ENCODE measurements at regions of chr6 and their contacts with region 1.

Region 1: GRCh38 chr6:17987576-17988421 is at the start of gene KIF13A:
- DNase-seq: peak; percentile 78 to 92 (median 86)
- H3K4me3 ChIP-seq: peak within 1 kb of the TSS; percentile 70 to 96 (median 86)
- H3K27ac ChIP-seq: peak within 1 kb of the TSS; percentile 40 to 73
- H3K4me1 ChIP-seq: peaks cover 15 to 46% (median 35%) of the 10 kb centered on the region in 4 experiments
- H3K27me3 ChIP-seq: no peaks in the 10 kb centered on the region

Region 2: DNA sequence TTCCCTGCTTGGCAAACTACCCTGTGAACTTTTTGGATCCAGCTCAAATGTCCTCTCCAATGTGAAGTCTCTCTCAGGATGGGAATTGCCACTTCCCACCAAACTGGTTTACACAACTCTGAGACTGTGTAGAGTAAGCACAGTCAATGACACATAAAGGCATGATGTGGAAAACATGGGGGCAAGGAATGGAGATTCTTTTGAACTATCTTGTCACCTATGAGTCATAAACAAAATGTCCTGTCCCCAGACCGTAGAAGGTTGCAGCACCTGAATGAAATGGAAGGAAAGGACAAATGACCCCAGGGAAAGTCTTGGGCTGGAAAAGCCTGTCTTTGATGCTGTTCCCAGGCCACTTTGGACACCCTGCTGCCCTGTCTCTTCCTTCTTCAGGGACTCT is 10.7 kb after region 1 on chr6:
- CTCF ChIA-PET with region 1: no interaction called
- POLR2A ChIA-PET with region 1: no interaction called
- DNase-seq: no peak
- H3K4me3 ChIP-seq: no peak overlapping the region
- H3K27ac ChIP-seq: no peak overlapping the region
- H3K4me1 ChIP-seq: peaks cover 0 to 13% (median 4%) of the 10 kb centered on the region in 4 experiments
- H3K27me3 ChIP-seq: no peaks in the 10 kb centered on the region

Region 3: DNA sequence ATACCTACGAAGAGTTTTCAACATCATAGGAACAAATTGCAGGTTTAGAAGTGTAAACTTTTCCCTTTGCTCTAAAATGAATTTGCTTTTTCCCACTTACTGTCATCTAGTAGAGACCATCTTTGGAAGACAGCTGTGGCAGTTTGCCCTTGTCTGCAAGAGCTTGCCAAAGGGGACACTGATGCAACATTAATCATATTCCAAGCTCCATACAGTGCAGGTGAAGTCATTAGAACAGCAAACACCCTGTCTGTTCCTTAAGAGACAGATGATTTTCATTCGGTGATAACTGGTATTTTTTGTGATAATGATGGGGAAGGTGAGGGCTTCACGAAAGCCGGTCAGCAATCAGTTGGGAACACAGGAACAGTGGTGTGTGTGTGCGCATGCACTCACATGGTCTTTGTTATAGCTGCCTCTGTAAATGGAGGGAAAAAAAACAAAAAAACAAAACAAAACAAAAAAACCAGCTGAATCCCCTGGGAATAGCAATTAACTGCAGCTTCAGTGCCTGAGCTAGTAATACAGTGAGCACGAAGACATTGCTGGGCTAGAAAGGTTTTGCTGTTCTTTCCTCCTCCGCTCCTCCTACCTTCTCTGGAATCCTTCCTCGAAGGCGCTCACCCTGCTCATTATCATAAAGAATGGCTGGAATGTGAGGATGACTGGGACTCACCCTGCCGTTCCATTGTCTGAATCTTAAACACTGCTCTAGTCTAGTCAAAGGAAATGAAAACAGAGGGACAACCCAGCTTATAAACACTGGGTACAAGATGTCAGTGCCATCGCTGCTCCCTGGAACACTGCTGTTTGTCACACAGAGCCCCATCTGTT is 34.8 kb after region 1 on chr6:
- CTCF ChIA-PET with region 1: no interaction called
- POLR2A ChIA-PET with region 1: no interaction called
- DNase-seq: no peak
- H3K4me3 ChIP-seq: no peak overlapping the region
- H3K27ac ChIP-seq: no peak overlapping the region
- H3K4me1 ChIP-seq: no peaks in the 10 kb centered on the region
- H3K27me3 ChIP-seq: peaks cover 0 to 3% (median 0%) of the 10 kb centered on the region in 5 experiments

Region 4: DNA sequence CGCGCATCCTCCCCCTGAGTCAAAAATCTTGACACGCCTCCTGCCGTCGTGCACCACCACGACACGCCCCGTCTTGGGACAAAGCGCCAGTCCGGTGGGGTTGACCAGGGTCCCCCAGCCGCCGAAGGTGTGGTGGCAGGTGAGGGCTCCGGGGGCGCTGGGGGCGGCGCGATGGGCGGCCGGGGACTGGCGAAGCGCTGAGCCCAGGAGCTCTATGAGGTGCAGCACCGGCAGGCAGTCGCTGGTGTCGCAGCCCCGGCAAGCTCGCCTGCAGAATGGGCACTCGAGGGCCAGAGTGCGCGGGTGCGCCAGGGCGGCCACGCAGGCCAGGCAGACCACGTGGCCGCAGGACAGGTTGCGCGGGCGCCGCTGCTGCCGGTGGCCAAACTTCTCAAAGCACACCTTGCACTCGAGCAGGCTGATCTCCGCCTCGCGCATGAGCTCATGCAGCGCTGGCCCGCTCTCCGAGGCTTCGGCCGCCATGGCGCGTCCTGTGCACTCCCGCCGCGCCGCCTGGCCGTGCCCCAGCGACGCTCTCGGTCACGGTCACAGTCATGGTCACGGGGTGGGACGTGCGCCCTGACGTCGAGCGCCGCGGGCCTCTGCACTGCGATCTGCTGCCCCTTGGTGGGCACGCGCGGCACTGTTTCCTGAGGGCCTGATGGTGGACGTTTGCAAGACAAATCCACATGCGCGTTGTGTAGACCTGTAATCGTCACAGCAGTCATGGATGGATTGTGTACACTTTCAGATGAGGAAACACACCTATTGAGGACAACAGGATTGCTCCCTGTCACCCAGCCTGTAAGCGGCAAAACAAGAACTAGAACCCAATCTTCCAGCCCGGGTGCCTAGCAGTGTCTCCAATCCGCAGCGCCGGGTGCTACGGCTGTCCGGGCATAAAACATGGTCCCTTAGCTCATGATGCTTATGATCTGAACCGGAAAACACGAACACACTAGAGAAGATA is 134.6 kb after region 1 on chr6 and contains the start of gene NHLRC1:
- CTCF ChIA-PET with region 1: interaction called, 10 read pairs
- POLR2A ChIA-PET with region 1: no interaction called
- DNase-seq: peak; percentile 90 to 95 (median 94)
- H3K4me3 ChIP-seq: peak within 1 kb of the TSS in 6 of 7 experiments; percentile 10 to 79 (median 62)
- H3K27ac ChIP-seq: no peak within 1 kb of the TSS
- H3K4me1 ChIP-seq: peaks cover 0 to 12% (median 7%) of the 10 kb centered on the region in 4 experiments
- H3K27me3 ChIP-seq: no peaks in the 10 kb centered on the region

Region 5: GRCh38 chr6:18166312-18167036 is 178.7 kb after region 1 on chr6:
- CTCF ChIA-PET with region 1: no interaction called
- POLR2A ChIA-PET with region 1: no interaction called
- DNase-seq: no peak
- H3K4me3 ChIP-seq: no peak overlapping the region
- H3K27ac ChIP-seq: no peak overlapping the region
- H3K4me1 ChIP-seq: peaks cover 0 to 2% (median 0%) of the 10 kb centered on the region in 4 experiments
- H3K27me3 ChIP-seq: no peaks in the 10 kb centered on the region

Measured in common myeloid progenitor, CD34-positive (primary cell).